Activated naive CD4-positive, alpha-beta T cell treated with anti-CD3 and anti-CD28 coated beads for 36 hours (primary cell): ENCODE measurements at regions of chr15 and their contacts with region 1.

Region 1: GRCh38 chr15:73633111-73633990 is at the start of gene NPTN:
- DNase-seq: peak; percentile 99
- H3K4me3 Mint-ChIP-seq: peak within 1 kb of the TSS; percentile 78
- H3K27ac Mint-ChIP-seq: no peak within 1 kb of the TSS
- H3K4me1 Mint-ChIP-seq: peaks cover 52% of the 10 kb centered on the region
- H3K27me3 Mint-ChIP-seq: peaks cover 12% of the 10 kb centered on the region
- total RNA-seq, gene NPTN: 20.8 to 22.8 TPM

Region 2: DNA sequence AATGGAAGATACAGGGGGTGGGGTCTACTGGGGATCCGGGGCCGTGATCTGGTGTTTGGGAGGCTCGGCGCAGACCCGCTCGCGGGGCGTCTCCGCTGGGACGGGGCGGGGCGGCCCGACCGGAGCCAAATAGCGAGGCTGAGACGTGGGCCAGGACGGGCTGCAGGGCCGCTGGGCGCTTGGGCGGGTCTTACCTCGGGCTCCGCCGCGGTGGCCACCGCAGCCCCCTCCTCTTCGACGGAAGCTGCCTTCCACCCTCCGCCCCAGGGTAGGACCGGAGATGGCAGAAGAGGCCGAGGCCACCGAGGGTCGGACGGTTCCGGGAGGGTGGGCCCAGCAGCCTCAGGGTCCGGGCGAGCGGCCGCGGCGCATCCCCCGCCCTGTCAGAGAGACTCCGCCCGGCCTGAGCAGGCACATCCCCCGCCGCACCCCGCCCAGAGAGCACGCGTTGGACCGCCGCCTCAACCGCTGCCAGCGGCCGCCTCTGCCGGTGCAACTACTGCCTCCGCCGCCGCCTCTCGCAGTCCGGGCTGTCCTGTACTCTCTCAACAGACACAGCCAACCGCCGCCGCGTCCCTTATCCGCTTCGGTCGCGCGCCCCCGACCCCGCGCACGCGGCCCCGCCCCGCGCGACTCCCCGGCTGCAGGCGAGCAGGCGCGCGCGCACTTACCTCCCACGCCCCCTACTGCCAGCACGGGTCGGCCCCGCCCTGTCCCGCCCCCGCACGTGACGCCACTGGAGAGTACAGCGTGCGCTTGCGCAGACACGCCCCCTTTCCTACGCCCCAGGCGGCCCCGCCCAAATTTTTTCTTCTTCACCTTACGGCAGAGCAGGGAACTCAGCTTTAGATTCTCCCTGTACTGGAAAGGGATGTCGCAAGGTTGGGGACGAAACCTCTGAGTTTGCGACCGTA is 1515.6 kb before region 1 on chr15 and contains the start of gene MYO9A:
- CTCF ChIA-PET with region 1: no interaction called
- intact Hi-C with region 1: loop called (anchors 10 kb)
- DNase-seq: peak; percentile 99
- H3K4me3 Mint-ChIP-seq: peak within 1 kb of the TSS; percentile 95
- H3K27ac Mint-ChIP-seq: peak within 1 kb of the TSS; percentile 97
- H3K4me1 Mint-ChIP-seq: peaks cover 31% of the 10 kb centered on the region
- H3K27me3 Mint-ChIP-seq: no peaks in the 10 kb centered on the region
- total RNA-seq, gene MYO9A: 9.5 to 10.0 TPM

Region 3: GRCh38 chr15:73240866-73241499 is 392.4 kb before region 1 on chr15:
- CTCF ChIA-PET with region 1: no interaction called
- intact Hi-C with region 1: loop called (anchors 1 kb)
- DNase-seq: peak; percentile 89
- H3K4me3 Mint-ChIP-seq: no peak overlapping the region
- H3K27ac Mint-ChIP-seq: no peak overlapping the region
- H3K4me1 Mint-ChIP-seq: no peaks in the 10 kb centered on the region
- H3K27me3 Mint-ChIP-seq: no peaks in the 10 kb centered on the region

Region 4: GRCh38 chr15:73560501-73561117 is 72.7 kb before region 1 on chr15:
- CTCF ChIA-PET with region 1: interaction called, 53 read pairs
- intact Hi-C with region 1: loop called (anchors 1 kb)
- DNase-seq: peak; percentile 21
- H3K4me3 Mint-ChIP-seq: no peak overlapping the region
- H3K27ac Mint-ChIP-seq: no peak overlapping the region
- H3K4me1 Mint-ChIP-seq: no peaks in the 10 kb centered on the region
- H3K27me3 Mint-ChIP-seq: no peaks in the 10 kb centered on the region

Region 5: DNA sequence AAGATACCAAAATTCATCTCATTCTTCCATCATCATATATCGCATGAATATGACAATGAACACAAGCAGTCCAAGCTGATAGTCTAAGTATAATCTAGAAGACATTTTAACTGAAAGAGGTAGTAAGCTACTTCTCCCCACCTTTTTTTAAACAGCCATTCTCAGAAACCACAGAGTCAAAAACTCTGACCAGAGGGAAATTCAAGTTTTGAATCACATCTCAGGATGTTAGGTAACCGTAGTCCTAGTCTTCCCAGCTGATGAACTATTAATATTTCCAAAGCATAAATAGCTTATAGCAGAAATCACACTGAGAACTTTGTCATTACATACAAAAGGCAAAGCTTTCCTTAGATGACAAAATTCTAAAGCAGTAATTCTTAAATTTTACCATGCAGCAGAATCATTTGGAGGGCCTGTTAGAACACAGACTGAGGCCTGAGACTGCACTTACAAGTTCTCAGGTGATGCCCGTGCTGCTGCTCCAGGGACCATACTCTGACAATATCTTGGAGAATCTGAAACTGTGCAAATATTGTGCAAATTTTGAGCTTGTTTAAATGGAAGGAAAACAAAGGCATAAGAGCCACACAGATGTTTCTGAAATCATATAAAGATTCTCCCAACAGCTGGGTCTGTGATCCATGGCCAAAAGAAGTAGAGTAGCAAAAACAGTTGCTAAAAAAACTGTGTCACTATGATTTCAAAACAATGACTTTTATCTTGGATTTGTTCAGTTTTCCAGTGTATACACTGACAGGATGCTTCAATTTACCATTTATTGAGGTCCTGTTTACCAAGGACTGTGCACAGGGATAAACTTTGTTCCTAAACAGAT is 25.7 kb before region 1 on chr15:
- CTCF ChIA-PET with region 1: interaction called, 63 read pairs
- intact Hi-C with region 1: no loop called
- DNase-seq: no peak
- H3K4me3 Mint-ChIP-seq: no peak overlapping the region
- H3K27ac Mint-ChIP-seq: no peak overlapping the region
- H3K4me1 Mint-ChIP-seq: peaks cover 58% of the 10 kb centered on the region
- H3K27me3 Mint-ChIP-seq: no peaks in the 10 kb centered on the region

Region 6: GRCh38 chr15:73677146-73677607 is 43.8 kb after region 1 on chr15:
- CTCF ChIA-PET with region 1: interaction called, 55 read pairs
- intact Hi-C with region 1: loop called (anchors 1 kb)
- DNase-seq: peak; percentile 68
- H3K4me3 Mint-ChIP-seq: no peak overlapping the region
- H3K27ac Mint-ChIP-seq: no peak overlapping the region
- H3K4me1 Mint-ChIP-seq: peaks cover 6% of the 10 kb centered on the region
- H3K27me3 Mint-ChIP-seq: peaks cover 14% of the 10 kb centered on the region

Region 7: DNA sequence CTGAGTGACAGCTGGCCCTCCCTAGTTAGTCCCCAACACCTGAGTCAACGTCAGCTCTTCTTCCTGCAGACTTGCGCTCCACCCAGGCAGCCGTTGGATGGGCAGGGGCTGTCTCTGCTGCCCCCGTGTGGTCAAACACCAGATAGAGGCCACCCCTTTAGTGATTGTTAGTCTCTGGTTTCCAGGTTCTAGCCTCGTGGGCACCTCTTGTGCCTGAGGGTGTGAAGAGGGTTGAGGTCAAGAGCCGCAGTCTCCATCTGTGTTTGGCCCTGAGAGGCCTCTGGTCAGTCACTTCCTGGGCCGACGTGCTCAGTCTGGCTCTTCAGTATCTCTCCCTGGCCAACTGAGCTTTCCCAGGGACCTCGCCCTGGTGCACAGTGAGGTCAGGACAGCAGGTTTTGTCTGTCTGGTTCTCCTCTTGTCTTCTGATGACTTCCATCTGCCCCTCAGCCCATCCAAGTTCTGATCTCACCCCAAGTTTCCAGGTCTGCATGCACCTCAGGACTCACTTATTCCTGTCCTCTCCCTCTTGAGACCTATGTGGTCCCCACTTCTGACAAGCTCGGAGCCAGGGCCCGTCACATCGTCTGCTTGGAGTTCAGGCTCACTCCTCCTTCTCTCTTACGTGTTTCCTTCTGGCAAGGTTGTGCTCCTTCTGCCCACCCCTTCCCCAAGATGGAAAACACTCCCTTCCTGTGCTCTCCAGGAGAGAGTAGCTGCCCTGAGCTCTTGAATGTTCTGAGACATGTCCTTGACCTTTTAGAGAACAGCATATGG is 71.7 kb after region 1 on chr15:
- CTCF ChIA-PET with region 1: interaction called, 414 read pairs
- intact Hi-C with region 1: loop called (anchors 1 kb)
- DNase-seq: peak; percentile 82
- H3K4me3 Mint-ChIP-seq: no peak overlapping the region
- H3K27ac Mint-ChIP-seq: no peak overlapping the region
- H3K4me1 Mint-ChIP-seq: peaks cover 2% of the 10 kb centered on the region
- H3K27me3 Mint-ChIP-seq: peaks cover 11% of the 10 kb centered on the region